ENCODE measurements at regions of chr13 and their contacts with region 1.

Region 1: DNA sequence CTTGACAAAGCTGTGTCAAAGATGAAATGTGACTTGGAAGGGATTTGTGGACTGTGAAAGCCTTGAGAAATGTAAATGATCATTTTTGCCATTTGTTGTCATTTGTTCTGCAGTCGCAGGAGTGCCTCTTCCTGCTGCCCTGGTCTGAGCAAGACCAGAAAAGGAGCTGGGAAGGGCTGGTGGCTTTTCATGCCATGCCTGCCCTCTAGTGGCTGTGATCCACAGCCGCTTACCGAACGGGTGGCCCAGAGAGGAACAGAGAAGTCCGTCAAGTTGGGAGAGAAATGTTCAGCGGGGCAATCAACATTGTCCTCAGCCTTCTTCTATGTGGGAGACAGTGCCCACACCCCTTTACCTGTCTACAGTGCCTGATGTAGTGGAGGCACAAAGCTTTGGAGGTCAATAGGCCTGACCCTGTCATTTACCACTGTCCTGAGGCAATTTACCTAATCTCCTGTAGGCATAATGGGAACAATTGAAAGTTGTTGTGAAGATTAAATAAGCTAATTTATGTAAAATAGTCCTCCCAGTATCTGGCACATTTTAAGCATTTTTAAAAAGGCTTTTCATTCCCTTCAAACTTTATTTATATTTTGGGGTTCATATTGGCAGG is 224.4 kb downstream of the B3GLCT start:
- DNase-seq: peak; percentile 85 to 87
- ATAC-seq: peak; percentile 88
- H3K4me3 ChIP-seq: no peak overlapping the region
- H3K27ac ChIP-seq: no peak overlapping the region
- H3K4me1 ChIP-seq: no peaks in the 10 kb centered on the region
- H3K27me3 ChIP-seq: no peaks in the 10 kb centered on the region

Region 2: GRCh38 chr13:31199849-31200636 is 224.2 kb before region 1 on chr13 and contains the start of gene B3GLCT:
- intact Hi-C with region 1: loop called in 1 of 2 experiments (anchors 10 kb)
- DNase-seq: peak; percentile 84 to 94
- ATAC-seq: peak; percentile 95
- H3K4me3 ChIP-seq: peak within 1 kb of the TSS; percentile 90 to 91
- H3K27ac ChIP-seq: peak within 1 kb of the TSS; percentile 83 to 87
- H3K4me1 ChIP-seq: no peaks in the 10 kb centered on the region
- H3K27me3 ChIP-seq: no peaks in the 10 kb centered on the region
- total RNA-seq, gene B3GLCT: 7.8 to 8.3 TPM

Region 3: GRCh38 chr13:31236211-31236786 is 187.9 kb before region 1 on chr13:
- intact Hi-C with region 1: loop called (anchors 2 to 10 kb)
- DNase-seq: no peak
- ATAC-seq: peak; percentile 54
- H3K4me3 ChIP-seq: no peak overlapping the region
- H3K27ac ChIP-seq: no peak overlapping the region
- H3K4me1 ChIP-seq: no peaks in the 10 kb centered on the region
- H3K27me3 ChIP-seq: no peaks in the 10 kb centered on the region

Region 4: DNA sequence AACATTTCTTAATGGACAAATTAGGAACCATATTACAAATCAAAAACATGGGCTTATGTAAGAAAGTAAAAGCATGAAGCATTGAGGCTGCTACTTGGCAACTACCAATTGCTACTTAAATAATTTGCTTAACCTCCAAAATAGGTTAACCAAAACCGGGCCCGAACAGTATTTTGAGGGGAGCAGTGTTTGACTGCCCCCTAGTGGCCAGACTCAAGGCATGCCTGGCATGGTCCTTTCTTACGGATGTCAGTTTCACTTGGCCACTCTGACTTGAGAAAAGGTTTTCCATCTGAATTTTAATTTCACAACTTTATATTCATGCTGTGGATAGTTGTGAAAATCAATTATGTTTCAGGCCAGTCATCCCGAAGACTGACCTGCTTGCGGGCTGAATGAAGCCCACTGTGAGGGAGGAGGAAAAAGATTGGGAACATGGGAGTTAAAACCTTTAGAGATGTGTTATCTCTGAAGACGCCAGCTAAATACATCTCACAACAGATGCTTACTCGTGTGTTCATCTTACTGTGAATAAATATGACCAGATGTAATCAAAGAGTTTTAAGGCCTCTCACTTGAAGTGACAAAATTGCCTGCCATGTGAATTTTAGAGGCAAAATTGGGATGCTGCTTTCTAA is 318.0 kb after region 1 on chr13:
- intact Hi-C with region 1: loop called in 1 of 2 experiments (anchors 5 kb)
- DNase-seq: peak; percentile 65 to 77
- ATAC-seq: peak; percentile 84
- H3K4me3 ChIP-seq: no peak overlapping the region
- H3K27ac ChIP-seq: no peak overlapping the region
- H3K4me1 ChIP-seq: no peaks in the 10 kb centered on the region
- H3K27me3 ChIP-seq: no peaks in the 10 kb centered on the region

Region 5: GRCh38 chr13:31945202-31945978 is 521.2 kb after region 1 on chr13:
- intact Hi-C with region 1: no loop called
- DNase-seq: peak; percentile 79 to 90
- ATAC-seq: no peak
- H3K4me3 ChIP-seq: no peak overlapping the region
- H3K27ac ChIP-seq: no peak overlapping the region
- H3K4me1 ChIP-seq: no peaks in the 10 kb centered on the region
- H3K27me3 ChIP-seq: no peaks in the 10 kb centered on the region